Vagina (tissue), 2 donors: ENCODE measurements at regions of chr6 and their contacts with region 1.

Region 1: DNA sequence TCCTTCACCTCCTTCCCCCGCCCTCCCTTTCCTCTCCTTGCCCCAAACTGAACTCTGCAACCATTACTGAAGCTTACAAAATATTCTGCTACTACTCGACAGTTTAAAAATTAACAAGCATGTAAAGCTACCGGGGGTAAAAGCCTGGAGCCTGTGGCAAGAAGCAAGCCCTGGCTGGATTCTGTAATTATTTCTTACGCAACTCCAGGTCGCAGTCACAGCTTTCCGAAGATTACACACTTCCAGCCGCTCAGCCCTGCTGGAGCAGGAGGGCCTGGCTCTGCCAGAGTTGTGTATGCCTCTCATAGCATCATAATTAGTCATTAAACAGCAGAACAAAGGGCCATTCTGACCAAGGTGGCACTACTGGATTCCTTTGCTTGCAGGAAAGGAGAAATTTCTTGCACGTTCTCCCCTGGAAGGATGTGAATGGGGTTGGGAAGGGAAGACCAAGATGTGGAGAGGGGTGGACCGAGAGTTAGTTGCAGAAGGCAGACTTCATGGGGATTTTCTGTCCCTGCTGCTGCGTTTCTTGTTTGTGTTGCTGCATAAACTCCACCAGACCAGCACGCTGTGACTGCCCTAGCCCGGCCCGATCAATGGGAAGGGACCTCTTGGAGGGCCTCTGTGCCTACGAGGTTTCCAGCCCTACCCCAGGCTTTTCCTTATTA is 23.6 kb downstream of the FOXQ1 start:
- DNase-seq: no peak
- H3K4me3 ChIP-seq: no peak overlapping the region
- H3K27ac ChIP-seq: no peak overlapping the region
- H3K4me1 ChIP-seq: peaks cover 4% of the 10 kb centered on the region
- H3K27me3 ChIP-seq: no peaks in the 10 kb centered on the region
- CTCF ChIP-seq: no peak
- POLR2A ChIP-seq: no peak

Region 2: DNA sequence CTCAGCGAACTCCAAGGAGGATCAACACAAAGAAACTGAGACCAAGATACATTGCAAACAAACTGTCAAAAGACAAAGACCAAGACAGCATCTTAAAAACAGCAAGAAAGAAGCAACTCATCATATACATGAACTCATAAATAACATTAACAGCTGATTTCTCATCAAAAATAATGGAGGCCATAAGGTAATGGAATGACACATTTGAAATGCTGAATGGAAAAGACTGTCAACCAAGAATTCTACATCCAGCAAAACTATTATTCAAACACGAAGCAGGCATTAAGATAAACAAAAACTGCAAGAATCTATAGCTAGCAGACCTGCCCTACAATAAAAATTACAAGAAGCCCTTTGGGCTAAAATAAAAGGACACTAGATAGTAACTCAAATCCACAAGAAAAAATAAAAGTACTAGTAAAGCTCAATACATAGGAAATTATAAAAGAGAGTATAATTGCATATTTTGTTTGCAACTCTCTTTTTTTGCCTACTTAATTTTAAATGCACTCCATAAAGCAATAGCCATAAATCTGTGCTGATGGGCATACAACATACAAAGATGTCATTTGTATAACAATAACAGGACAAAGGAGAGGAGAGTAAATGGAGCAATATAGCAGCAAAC is 16.0 kb after region 1 on chr6:
- intact Hi-C with region 1: loop called (anchors 2 kb)
- DNase-seq: no peak
- H3K4me3 ChIP-seq: no peak overlapping the region
- H3K27ac ChIP-seq: no peak overlapping the region
- H3K4me1 ChIP-seq: no peaks in the 10 kb centered on the region
- H3K27me3 ChIP-seq: no peaks in the 10 kb centered on the region
- CTCF ChIP-seq: no peak
- POLR2A ChIP-seq: no peak

Region 3: GRCh38 chr6:3118353-3119039 is 1783.0 kb after region 1 on chr6 and contains the start of gene BPHL:
- intact Hi-C with region 1: no loop called
- DNase-seq: peak; percentile 95 to 98
- H3K4me3 ChIP-seq: peak within 1 kb of the TSS; percentile 74 to 92
- H3K27ac ChIP-seq: peak within 1 kb of the TSS; percentile 80
- H3K4me1 ChIP-seq: peaks cover 20% of the 10 kb centered on the region
- H3K27me3 ChIP-seq: no peaks in the 10 kb centered on the region
- CTCF ChIP-seq: no peak
- POLR2A ChIP-seq: peak; percentile 12 to 82
- total RNA-seq, gene BPHL: 10.3 TPM

Region 4: DNA sequence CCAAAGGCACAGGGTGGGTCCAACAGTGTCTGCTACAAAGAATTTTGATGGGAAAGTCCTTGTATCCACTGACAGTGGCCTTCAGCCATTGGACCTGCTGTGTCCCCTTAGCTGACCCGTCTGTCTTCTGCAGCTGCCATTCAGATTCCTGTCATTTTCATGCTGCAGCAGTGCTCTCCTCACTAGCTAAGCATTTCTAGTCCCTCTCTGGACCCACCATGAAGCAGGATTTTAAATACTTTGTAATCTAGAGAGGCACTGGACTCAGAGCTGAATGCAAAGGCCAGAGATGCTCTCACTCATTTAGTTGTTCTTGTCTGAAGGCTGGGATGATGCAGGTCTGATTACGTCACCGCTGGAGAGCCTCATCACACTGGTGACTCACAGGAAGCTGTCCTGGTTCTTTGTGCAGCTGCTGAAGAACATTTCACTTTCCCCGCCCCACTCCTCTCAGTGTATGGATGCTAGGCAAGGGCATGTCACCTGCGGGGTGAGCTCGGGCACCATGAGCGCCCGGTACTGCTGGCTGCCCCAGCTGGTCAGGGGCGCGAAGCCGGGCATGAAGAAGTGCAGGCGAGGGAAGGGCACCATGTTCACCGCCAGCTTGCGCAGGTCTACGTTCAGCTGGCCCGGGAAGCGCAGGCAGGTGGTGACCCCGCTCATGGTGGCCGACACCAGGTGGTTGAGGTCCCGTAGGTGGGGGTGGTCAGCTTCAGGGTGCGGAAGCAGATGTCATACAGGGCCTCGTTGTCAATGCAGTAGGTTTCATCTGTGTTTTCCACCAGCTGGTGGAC is 1841.3 kb after region 1 on chr6:
- intact Hi-C with region 1: no loop called
- DNase-seq: no peak
- H3K4me3 ChIP-seq: no peak overlapping the region
- H3K27ac ChIP-seq: no peak overlapping the region
- H3K4me1 ChIP-seq: no peaks in the 10 kb centered on the region
- H3K27me3 ChIP-seq: no peaks in the 10 kb centered on the region
- CTCF ChIP-seq: no peak
- POLR2A ChIP-seq: no peak